GM12878 (cell line): ENCODE measurements at regions of chr11 and their contacts with region 1.

Region 1: DNA sequence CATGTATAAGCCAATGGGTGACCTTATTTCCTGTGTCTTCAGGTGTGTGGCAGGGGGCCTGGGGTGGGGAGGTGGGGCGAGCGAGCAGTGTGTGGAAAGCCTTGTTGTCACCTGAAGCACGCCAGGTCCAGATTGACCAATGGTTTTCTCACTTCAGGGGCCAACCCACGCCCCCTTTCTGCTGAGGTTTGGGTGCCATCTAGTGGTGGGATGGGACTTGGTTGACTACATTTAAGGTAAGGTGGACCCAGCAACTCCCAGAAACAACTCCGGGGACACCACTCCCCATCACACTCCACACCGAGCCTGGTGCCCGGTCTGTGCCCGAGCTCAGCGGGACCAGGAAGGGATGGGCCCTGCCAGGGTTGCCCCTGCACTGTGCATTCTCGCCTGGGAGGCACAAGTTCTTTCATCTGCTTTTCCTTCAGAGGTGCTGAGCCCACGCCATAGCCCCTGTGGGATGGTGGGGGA is 40.0 kb downstream of the TPCN2 start:
- DNase-seq: peak; percentile 28
- ATAC-seq: peak; percentile 97
- H3K4me3 ChIP-seq: no peak overlapping the region
- H3K27ac ChIP-seq: no peak overlapping the region
- H3K4me1 ChIP-seq: no peaks in the 10 kb centered on the region
- H3K27me3 ChIP-seq: no peaks in the 10 kb centered on the region
- CTCF ChIP-seq: peak; percentile 77 to 90 (median 79)
- EP300 ChIP-seq: no peak
- POLR2A ChIP-seq: peak; percentile 43; the same call in 1 of the 2 replicates
- RAD21 ChIP-seq: peak; percentile 98

Region 2: GRCh38 chr11:68632802-68633201 is 455.9 kb before region 1 on chr11:
- CTCF ChIA-PET with region 1: no interaction called
- POLR2A ChIA-PET with region 1: no interaction called
- RAD21 ChIA-PET with region 1: no interaction called
- SMC1A ChIA-PET with region 1: no interaction called
- in situ Hi-C with region 1: loop called (anchors 10 kb)
- intact Hi-C with region 1: loop called (anchors 2 kb)
- DNase-seq: no peak
- ATAC-seq: peak; percentile 79
- H3K4me3 ChIP-seq: no peak overlapping the region
- H3K27ac ChIP-seq: no peak overlapping the region
- H3K4me1 ChIP-seq: no peaks in the 10 kb centered on the region
- H3K27me3 ChIP-seq: no peaks in the 10 kb centered on the region; a peak in 2 of 4 replicates
- CTCF ChIP-seq: peak; percentile 49 to 60 (median 55); a peak in 5 of 6 replicates
- EP300 ChIP-seq: no peak
- POLR2A ChIP-seq: no peak
- RAD21 ChIP-seq: peak; percentile 73

Region 3: DNA sequence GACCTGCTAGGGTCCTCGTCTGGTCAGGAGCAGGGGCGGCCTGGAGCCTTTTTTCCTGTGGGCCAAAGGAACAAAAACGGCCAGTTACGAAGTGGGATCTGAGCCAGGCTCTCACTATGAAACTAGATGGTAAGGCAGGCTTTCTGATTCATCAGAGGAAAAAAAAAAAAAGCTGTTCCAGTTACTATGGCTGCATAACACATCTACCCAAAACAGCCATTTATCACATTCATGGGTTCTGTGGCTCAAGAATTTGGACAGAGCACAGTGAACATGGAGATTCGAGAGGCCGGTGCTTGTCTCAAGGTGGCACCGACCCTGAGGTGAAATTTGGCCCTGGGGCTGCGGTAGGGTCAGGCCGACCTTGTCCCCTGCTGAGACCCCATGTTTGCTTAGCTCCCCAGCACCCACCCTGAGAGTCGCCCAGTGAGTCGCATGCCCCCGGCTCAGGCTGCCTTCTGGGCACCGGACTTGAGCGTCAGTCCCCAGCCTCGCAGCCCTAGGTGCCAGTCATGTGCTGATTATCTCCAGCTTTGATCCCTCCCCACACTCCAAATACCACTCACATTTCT is 142.2 kb before region 1 on chr11:
- CTCF ChIA-PET with region 1: no interaction called
- POLR2A ChIA-PET with region 1: no interaction called
- RAD21 ChIA-PET with region 1: no interaction called
- SMC1A ChIA-PET with region 1: no interaction called
- in situ Hi-C with region 1: no loop called
- intact Hi-C with region 1: loop called (anchors 5 kb)
- DNase-seq: no peak
- ATAC-seq: no peak
- H3K4me3 ChIP-seq: no peak overlapping the region
- H3K27ac ChIP-seq: no peak overlapping the region
- H3K4me1 ChIP-seq: no peaks in the 10 kb centered on the region; the same call in 1 of the 2 replicates
- H3K27me3 ChIP-seq: no peaks in the 10 kb centered on the region
- CTCF ChIP-seq: no peak
- EP300 ChIP-seq: no peak
- POLR2A ChIP-seq: no peak
- RAD21 ChIP-seq: no peak